Activated T-helper 2 cell treated with anti-CD3 and anti-CD28 coated beads, Interferon-gamma antibody, Interleukin-2, Interleukin-4, amounts not matched to agents 10 μg/mL and 5 μg/mL and 100 μg/mL, durations not matched to agents 14 hours and 24 hours and 36 hours (primary cell): ENCODE measurements at regions of chr15 and their contacts with region 1.

Region 1: DNA sequence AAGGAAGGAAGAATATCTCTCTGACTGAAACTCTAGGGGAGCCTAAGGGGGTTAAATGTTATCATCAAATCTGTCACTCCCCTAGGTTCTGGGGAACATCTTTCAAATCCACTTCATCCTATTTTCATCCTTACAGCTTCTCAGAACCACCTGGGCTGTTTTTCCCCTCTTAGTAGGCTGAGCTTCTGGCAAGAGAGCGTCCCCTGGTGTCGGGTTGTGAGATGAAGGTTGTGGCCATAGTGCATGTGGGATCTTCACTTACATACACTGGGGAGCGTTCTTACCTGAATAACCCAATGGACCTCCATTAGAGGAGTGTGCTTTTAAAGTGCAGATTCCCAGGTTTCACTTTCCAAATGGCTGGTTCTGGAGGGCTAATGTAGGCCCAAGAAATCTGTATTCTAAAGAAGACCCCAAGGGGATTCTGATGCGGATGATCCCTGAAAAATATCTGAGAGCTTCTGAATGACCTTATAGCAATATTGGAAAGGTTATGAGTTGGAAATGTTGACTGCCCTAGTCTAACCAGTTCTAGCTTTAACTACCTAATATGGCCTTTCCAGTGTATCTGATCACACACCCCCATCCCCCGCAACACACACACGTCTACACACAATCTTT is 663.7 kb downstream of the AGBL1 start:
- DNase-seq: peak; percentile 38
- H3K4me3 Mint-ChIP-seq: no peak overlapping the region
- H3K27ac Mint-ChIP-seq: no peak overlapping the region
- H3K4me1 Mint-ChIP-seq: peaks cover 15% of the 10 kb centered on the region
- H3K27me3 Mint-ChIP-seq: no peaks in the 10 kb centered on the region

Region 2: GRCh38 chr15:86691091-86691663 is 52.2 kb before region 1 on chr15:
- intact Hi-C with region 1: loop called (anchors 5 kb)
- DNase-seq: no peak
- H3K4me3 Mint-ChIP-seq: no peak overlapping the region
- H3K27ac Mint-ChIP-seq: no peak overlapping the region
- H3K4me1 Mint-ChIP-seq: peaks cover 6% of the 10 kb centered on the region
- H3K27me3 Mint-ChIP-seq: no peaks in the 10 kb centered on the region

Region 3: DNA sequence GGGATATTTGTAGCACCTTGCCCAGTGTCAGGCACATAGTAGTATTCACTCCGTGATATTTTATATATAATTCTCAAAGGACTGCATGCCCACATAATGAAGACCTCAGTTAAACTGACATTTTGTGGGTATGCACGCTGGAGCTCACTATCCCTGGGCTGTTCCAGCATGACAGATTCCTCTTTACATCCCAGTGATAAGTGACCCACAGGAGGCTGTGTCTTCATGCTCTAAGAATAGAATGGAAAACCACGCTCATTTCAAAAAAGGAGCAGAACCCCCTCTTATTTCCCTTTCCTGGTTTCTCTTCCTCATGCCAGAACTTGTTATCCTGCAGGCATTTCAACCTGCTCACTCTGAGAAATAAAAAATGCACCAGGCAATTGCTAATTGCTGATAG is 53.7 kb after region 1 on chr15:
- intact Hi-C with region 1: no loop called
- DNase-seq: no peak
- H3K4me3 Mint-ChIP-seq: no peak overlapping the region
- H3K27ac Mint-ChIP-seq: no peak overlapping the region
- H3K4me1 Mint-ChIP-seq: no peaks in the 10 kb centered on the region
- H3K27me3 Mint-ChIP-seq: no peaks in the 10 kb centered on the region